Tibial artery (tissue), 4 donors: ENCODE measurements at regions of chr10 and their contacts with region 1.

Region 1: DNA sequence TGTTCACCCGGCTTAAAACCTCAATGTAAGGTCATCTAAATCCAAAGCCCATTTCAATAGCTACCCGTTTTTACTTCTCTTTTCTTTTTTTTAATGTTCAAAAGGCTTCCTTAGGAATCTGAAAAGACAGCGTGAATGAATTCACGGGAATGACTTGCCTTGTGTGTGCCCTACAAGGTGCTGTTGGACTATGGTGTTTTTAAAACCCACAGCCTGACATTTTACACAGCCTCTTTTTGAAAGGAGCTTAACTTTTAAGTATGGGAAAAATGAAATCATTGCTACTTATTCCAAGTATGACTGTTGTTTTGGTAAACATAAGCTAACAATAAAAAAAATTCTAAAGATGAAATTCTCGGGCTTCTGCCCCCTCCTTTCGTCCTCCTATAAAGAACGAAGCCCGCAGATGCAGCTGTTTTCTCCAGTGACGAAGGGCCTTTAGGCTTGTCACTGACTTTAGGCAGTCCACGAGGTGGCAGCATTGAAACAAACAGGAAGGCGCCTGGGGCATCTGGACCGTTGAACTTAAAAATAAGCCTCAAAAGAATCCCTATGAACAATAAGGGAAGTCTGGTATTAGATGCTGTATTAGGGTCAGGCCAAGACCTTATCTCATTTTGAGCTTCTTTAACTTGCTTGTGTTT is 141.3 kb downstream of the NRP1 start:
- DNase-seq: peak; percentile 88 to 89
- H3K4me3 ChIP-seq: no peak overlapping the region
- H3K27ac ChIP-seq: peak overlapping the region; percentile 54 to 60
- H3K4me1 ChIP-seq: peaks cover 0 to 41% (median 11%) of the 10 kb centered on the region in 4 donors
- H3K27me3 ChIP-seq: no peaks in the 10 kb centered on the region
- CTCF ChIP-seq: peak; percentile 79 to 80

Region 2: GRCh38 chr10:32865170-32865569 is 328.0 kb before region 1 on chr10:
- intact Hi-C with region 1: no loop called
- DNase-seq: no peak
- H3K4me3 ChIP-seq: no peak overlapping the region
- H3K27ac ChIP-seq: no peak overlapping the region
- H3K4me1 ChIP-seq: no peaks in the 10 kb centered on the region
- H3K27me3 ChIP-seq: no peaks in the 10 kb centered on the region
- CTCF ChIP-seq: no peak

Region 3: GRCh38 chr10:33025039-33025438 is 168.1 kb before region 1 on chr10:
- intact Hi-C with region 1: no loop called
- DNase-seq: no peak
- H3K4me3 ChIP-seq: no peak overlapping the region
- H3K27ac ChIP-seq: no peak overlapping the region
- H3K4me1 ChIP-seq: peaks cover 0 to 20% (median 10%) of the 10 kb centered on the region in 4 donors
- H3K27me3 ChIP-seq: no peaks in the 10 kb centered on the region
- CTCF ChIP-seq: no peak

Region 4: GRCh38 chr10:33234831-33235237 is 41.7 kb after region 1 on chr10:
- intact Hi-C with region 1: no loop called
- DNase-seq: no peak
- H3K4me3 ChIP-seq: no peak overlapping the region
- H3K27ac ChIP-seq: peak overlapping the region; percentile 36 to 56
- H3K4me1 ChIP-seq: peaks cover 0 to 20% (median 7%) of the 10 kb centered on the region in 4 donors
- H3K27me3 ChIP-seq: no peaks in the 10 kb centered on the region
- CTCF ChIP-seq: no peak

Region 5: DNA sequence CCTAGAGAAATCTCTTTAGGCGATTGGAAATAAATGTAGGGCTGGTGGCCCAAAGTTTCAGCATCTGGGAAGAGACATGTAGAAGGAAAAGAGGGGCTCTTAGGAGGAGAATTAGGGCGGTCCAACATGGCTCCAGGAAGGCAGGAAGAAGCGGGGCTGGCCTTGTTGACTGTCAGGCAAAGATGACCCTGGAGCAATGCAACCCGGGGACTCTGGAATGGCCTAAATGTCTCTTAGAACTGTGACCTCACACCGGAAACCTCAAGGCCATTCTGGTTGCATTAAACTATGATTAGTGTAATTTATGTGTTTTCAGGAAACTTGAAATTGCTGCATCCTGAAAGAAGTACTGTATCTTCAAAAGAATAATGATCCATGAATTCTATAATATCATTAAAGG is 74.5 kb after region 1 on chr10:
- intact Hi-C with region 1: loop called (anchors 2 kb)
- DNase-seq: no peak
- H3K4me3 ChIP-seq: no peak overlapping the region
- H3K27ac ChIP-seq: no peak overlapping the region
- H3K4me1 ChIP-seq: peaks cover 0 to 13% (median 9%) of the 10 kb centered on the region in 4 donors
- H3K27me3 ChIP-seq: no peaks in the 10 kb centered on the region
- CTCF ChIP-seq: no peak

Region 6: DNA sequence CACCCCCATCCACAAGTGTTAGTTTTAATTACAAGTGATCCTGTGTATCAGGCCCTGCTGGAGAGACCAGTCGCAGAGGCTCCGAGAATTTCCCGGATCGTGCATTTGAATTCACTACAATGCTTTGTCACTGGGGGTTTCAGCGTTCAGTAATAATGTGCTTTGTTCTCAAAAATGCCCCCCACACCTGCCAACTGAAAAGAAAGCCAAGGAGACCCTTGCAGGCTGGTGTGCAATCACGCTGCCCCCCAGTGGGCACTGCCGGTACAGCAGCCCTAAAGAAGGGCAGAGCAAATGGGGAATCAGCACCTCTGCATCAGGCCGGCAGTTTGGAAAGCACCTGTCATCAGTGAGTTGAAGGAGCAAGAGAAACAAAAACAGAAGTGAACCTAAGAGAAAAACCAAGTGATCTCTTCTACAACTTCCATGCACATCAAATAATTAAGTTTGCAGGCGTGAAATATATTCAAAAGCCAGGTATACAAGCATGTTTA is 1444.3 kb after region 1 on chr10:
- intact Hi-C with region 1: loop called (anchors 5 kb)
- DNase-seq: peak; percentile 73 to 77
- H3K4me3 ChIP-seq: no peak overlapping the region
- H3K27ac ChIP-seq: no peak overlapping the region
- H3K4me1 ChIP-seq: peaks cover 10 to 20% (median 13%) of the 10 kb centered on the region in 4 donors
- H3K27me3 ChIP-seq: no peaks in the 10 kb centered on the region
- CTCF ChIP-seq: peak; percentile 88 to 95